Dendritic cell treated with granulocyte-macrophage colony-stimulating factor and Interleukin-4, amounts not matched to agents 40 ng/mL and 50 ng/mL, for 4 days (primary cell): ENCODE measurements at regions of chr4 and their contacts with region 1.

Region 1: DNA sequence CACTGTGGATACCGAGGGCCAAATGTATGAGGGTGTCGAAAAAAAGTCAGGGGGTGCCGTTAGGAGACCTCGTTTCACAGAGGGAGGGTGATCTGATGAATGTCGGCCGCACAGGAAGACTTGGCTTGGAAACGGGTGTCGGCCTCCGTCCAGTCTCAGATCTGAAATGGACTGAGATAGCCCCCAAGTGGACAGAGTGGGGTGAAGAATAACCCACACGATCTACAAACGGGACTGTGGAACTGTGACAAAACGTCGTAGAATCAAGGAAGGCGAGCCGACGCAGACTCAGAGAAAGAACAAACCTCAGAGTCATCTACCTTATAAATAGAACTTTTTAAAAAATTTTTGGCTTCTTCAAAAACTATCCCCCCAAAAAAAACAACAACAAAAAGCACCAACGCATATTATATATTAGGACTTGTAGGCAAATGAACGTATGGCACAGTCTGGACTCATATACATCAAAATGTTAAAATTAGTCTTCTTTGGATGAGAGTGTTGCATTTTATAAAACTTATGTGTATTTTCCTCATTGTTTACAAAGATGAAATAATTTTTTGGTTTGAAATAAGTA is 63.8 kb upstream of the IRF2 start:
- H3K4me3 Mint-ChIP-seq: peak overlapping the region; percentile 92
- H3K27ac Mint-ChIP-seq: peak overlapping the region; percentile 97
- H3K4me1 Mint-ChIP-seq: peaks cover 31% of the 10 kb centered on the region
- H3K27me3 Mint-ChIP-seq: no peaks in the 10 kb centered on the region

Region 2: DNA sequence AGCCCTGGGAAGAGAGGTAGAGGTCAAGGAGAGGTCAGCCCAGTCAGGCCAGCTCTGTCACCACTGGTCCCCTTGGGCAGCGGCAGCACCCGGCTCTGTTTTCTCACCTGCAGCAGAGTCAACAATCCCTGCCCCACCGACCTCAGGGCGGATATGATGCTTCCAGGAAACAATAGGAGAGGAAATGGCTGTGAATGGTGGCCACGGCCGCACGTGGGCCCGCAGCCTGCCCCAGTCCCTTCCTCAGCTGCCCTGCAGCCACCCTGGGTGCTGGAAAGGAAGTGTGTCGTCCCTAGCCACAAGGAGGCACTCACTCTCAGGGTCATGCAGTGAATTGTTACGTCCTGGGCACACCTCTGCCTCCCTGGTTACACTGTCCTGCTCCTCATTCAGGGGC is 227.9 kb before region 1 on chr4:
- intact Hi-C with region 1: loop called (anchors 1 kb)
- H3K4me3 Mint-ChIP-seq: no peak overlapping the region
- H3K27ac Mint-ChIP-seq: peak overlapping the region; percentile 38
- H3K4me1 Mint-ChIP-seq: peaks cover 47% of the 10 kb centered on the region
- H3K27me3 Mint-ChIP-seq: no peaks in the 10 kb centered on the region

Region 3: GRCh38 chr4:184392748-184393334 is 145.3 kb before region 1 on chr4:
- intact Hi-C with region 1: loop called (anchors 5 kb)
- H3K4me3 Mint-ChIP-seq: peak overlapping the region; percentile 69
- H3K27ac Mint-ChIP-seq: peak overlapping the region; percentile 96
- H3K4me1 Mint-ChIP-seq: peaks cover 74% of the 10 kb centered on the region
- H3K27me3 Mint-ChIP-seq: no peaks in the 10 kb centered on the region

Region 4: GRCh38 chr4:184514121-184514988 is 23.8 kb before region 1 on chr4:
- intact Hi-C with region 1: loop called (anchors 2 kb)
- H3K4me3 Mint-ChIP-seq: peak overlapping the region; percentile 20
- H3K27ac Mint-ChIP-seq: peak overlapping the region; percentile 83
- H3K4me1 Mint-ChIP-seq: peaks cover 47% of the 10 kb centered on the region
- H3K27me3 Mint-ChIP-seq: no peaks in the 10 kb centered on the region

Region 5: GRCh38 chr4:185149392-185149791 is 611.3 kb after region 1 on chr4:
- intact Hi-C with region 1: no loop called
- H3K4me3 Mint-ChIP-seq: no peak overlapping the region
- H3K27ac Mint-ChIP-seq: no peak overlapping the region
- H3K4me1 Mint-ChIP-seq: no peaks in the 10 kb centered on the region
- H3K27me3 Mint-ChIP-seq: peaks cover 18% of the 10 kb centered on the region